Right ventricle myocardium superior (tissue), 1 donor: ENCODE measurements at regions of chr18 and their contacts with region 1.

Region 1: DNA sequence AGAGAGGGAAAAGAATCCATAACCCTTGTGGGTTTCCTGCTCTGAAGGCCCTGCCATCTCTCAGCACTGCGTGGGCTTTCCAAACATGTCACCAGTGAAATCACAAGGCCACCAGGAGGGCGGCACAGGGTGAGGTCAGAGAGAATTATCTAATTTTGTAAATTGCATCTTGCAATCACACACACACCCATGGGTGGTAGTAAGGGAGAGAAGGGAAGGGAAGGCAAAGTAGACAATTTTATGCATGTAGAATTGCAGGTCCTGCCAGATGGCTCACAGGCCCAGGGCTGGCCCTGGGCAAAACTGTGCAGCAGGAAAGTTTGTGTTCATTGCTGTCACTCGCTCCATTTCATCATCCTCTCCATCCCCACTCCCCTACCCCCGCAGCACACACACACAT is 21.0 kb upstream of the ZBTB7C start:
- DNase-seq: no peak
- ATAC-seq: no peak

Region 2: DNA sequence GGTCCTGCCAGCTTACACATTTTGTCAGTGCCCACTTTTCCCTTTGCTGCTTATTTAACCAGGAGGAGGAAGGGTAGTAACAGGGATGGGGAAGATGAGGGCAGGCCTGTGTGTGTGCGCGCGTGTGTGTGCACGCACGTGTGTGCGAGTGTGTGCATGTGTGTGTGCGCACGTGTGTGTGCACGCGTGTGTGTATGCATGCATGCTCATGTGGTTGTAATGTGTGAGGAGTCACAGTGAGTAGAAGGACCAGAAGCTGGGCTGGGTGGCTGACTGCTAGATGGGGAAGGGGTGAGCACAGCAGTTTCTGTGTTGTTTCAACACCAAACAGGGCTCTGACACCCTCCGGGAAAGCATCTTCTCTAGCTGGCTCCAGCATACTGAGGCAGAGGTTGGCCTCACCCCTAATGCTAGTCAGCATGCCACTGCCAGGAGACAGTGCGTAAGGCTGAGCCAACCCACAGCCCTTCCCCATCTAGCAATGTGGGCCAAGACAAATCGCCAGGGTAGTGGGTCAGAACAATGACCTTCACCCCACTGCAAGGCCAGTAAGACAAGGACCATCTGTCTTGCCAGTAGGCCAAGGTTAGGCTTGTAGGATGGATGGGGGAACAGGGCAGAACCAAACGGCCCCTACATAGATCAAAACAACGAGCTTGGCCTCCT is 281.0 kb before region 1 on chr18:
- intact Hi-C with region 1: loop called (anchors 5 kb)
- DNase-seq: no peak
- ATAC-seq: no peak

Region 3: DNA sequence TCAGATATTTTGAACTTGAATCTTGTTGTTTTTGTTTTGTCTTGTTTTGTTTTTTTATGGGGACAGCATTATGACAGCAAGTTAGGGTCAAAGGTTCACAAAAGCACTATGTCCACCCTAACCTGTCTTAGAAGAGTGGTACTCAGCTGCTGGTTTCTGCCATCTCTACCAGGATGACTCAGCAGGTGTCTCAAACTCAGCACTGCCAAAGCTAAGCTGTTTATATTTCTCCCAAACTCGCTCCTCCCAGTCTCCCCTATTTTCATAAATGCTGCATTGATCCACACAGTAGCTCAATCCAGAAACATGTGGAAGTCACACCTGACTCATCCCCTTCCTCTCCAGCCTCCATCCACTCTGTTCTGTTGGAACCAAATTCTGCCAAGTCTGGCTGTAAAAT is 155.8 kb before region 1 on chr18:
- intact Hi-C with region 1: no loop called
- DNase-seq: no peak
- ATAC-seq: no peak